ENCODE measurements at regions of chr1 and their contacts with region 1.

Region 1: GRCh38 chr1:32291708-32292492 is at the start of gene HDAC1:
- DNase-seq: peak; percentile 98
- H3K4me3 Mint-ChIP-seq: peak within 1 kb of the TSS; percentile 97
- H3K27ac Mint-ChIP-seq: peak within 1 kb of the TSS; percentile 91
- H3K4me1 Mint-ChIP-seq: peaks cover 22% of the 10 kb centered on the region
- H3K27me3 Mint-ChIP-seq: no peaks in the 10 kb centered on the region
- CTCF ChIP-seq: no peak
- total RNA-seq, gene HDAC1: 186 and 197 TPM in 2 replicates

Region 2: DNA sequence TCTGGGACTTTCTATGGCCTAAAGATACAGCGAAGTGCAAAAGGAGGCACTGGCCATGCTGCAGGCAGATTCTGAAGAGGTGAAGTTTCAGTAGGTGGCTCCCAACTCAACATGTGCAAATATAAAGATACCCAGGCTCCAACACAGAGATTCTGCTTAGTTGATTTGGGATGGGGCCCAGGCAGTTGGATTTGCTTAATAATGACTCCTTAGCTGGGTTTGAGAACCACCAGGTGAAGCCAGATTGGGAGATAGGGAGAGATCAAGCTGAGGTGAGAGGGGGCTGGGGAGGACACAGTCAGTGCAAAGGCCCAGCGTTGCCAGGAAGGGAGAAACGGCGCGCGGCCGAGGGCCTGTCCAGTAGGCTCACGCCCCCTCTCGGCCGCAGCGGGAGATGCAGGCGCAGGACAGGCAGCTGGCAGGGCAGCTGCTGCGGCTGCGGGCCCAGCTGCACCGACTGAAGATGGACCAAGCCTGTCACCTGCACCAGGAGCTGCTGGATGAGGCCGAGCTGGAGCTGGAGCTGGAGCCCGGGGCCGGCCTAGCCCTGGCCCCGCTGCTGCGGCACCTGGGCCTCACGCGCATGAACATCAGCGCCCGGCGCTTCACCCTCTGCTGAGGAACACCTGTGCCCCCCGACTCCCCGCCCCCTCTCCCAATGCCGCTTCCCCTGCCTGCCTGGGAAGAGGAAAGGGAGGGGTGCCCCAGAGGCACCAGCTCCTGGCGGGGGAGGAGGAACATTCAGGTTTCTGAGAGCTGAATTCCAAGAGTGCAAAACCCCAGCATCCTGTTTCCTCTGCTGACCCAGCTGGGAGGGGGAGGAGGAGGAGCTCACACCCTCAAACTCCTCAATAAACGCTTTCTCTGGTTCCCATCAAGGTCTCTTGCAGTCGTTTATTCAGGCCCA is 43.7 kb before region 1 on chr1:
- CTCF ChIA-PET with region 1: no interaction called
- intact Hi-C with region 1: loop called (anchors 10 kb)
- DNase-seq: no peak
- H3K4me3 Mint-ChIP-seq: no peak overlapping the region
- H3K27ac Mint-ChIP-seq: no peak overlapping the region
- H3K4me1 Mint-ChIP-seq: peaks cover 9% of the 10 kb centered on the region
- H3K27me3 Mint-ChIP-seq: no peaks in the 10 kb centered on the region
- CTCF ChIP-seq: no peak

Region 3: GRCh38 chr1:32309960-32310359 is 18.1 kb after region 1 on chr1:
- CTCF ChIA-PET with region 1: no interaction called
- intact Hi-C with region 1: no loop called
- DNase-seq: no peak
- H3K4me3 Mint-ChIP-seq: no peak overlapping the region
- H3K27ac Mint-ChIP-seq: no peak overlapping the region
- H3K4me1 Mint-ChIP-seq: peaks cover 28% of the 10 kb centered on the region
- H3K27me3 Mint-ChIP-seq: no peaks in the 10 kb centered on the region
- CTCF ChIP-seq: no peak

Region 4: DNA sequence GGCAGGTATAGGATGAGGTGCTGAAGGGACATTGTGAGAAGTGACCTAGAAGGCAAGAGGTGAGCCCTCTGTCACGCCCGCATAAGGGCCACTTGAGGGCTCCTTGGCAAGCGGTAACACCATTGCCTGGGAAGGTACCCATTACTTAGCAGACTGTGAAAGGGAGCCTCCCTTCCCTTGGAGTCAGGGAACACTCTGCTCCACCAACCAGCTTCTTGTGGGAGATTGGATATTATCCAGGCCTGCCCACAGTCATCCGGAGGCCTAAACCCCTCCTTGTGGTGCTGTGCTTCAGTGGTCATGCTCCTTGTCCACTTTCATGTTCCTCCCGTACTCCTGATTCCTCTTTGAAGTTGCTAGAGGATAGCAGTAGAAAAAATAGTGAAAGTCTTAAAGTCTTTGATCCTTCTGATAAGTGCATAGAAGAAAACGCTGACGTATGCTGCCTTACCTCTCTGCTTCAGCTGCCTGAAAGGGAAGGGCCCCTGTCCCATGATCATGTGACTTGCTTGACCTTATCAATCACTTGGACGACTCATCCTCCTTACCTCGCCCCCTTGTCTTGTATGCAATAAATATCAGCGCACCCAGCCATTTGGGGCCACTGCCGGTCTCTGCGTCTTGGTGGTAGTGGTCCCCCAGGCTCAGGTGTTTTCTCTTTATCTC is 375.1 kb after region 1 on chr1:
- CTCF ChIA-PET with region 1: no interaction called
- intact Hi-C with region 1: no loop called
- DNase-seq: no peak
- H3K4me3 Mint-ChIP-seq: no peak overlapping the region
- H3K27ac Mint-ChIP-seq: no peak overlapping the region
- H3K4me1 Mint-ChIP-seq: no peaks in the 10 kb centered on the region
- H3K27me3 Mint-ChIP-seq: no peaks in the 10 kb centered on the region
- CTCF ChIP-seq: no peak